ENCODE measurements at regions of chr5 and their contacts with region 1.

Region 1: GRCh38 chr5:142748568-142749249 is 21.5 kb upstream of the ARHGAP26 start:
- DNase-seq: peak; percentile 37
- CTCF ChIP-seq: peak; percentile 55

Region 2: DNA sequence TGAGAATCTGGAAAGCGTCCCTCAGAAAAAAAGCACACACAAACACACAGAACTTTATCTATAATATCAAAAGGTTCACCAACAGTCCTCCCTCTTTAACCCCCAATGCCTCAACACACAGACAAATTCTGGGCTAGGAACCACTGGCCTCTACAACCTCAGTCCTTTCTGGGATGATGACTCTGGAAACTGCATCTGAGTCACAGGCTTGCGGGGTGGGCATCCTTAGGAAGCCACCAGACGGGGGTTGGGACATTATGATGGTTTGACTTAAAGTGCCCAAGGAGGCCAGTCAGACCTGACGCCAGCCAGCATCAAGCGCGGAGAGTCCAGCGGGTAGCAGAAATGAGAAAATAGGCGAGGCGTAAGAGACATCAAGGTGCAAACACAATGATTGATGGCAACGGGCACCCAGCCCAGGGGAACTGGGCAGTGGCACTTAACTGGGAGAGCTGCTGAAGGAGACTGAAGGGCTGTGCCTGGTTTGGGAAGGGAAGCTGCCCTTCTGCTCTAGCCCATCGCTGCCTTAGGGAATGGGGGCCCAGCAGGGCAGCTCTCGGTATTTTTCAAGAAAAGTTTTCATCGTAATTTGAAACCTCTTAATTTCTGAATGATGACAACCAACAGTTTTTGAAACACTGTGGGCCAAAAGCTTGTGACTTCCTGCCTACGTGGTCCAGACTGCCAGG is 444.6 kb before region 1 on chr5:
- CTCF ChIA-PET with region 1: no interaction called
- POLR2A ChIA-PET with region 1: no interaction called
- DNase-seq: no peak
- CTCF ChIP-seq: no peak

Region 3: GRCh38 chr5:142472300-142472951 is 276.3 kb before region 1 on chr5:
- CTCF ChIA-PET with region 1: no interaction called
- POLR2A ChIA-PET with region 1: no interaction called
- DNase-seq: no peak
- CTCF ChIP-seq: no peak

Region 4: DNA sequence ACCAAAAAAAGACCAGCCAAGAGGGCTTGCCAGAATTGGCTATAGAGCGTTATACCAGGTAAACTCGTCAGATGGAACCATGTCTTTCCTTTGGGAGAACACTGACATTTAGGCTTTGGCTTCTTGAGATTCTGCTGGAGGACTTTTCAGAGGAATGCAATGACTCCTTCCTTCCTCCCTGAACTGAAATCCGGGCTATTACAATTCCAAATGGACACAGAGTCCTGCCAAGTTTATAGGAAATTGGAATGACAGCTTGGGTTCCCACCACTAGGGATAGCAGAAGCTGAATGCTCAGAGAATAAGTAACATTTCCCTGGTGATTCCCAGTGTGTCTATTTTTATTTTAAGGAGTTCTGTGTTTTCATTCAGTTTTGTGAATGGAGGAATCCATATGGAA is 205.8 kb before region 1 on chr5:
- CTCF ChIA-PET with region 1: no interaction called
- POLR2A ChIA-PET with region 1: no interaction called
- DNase-seq: no peak
- CTCF ChIP-seq: no peak

Region 5: DNA sequence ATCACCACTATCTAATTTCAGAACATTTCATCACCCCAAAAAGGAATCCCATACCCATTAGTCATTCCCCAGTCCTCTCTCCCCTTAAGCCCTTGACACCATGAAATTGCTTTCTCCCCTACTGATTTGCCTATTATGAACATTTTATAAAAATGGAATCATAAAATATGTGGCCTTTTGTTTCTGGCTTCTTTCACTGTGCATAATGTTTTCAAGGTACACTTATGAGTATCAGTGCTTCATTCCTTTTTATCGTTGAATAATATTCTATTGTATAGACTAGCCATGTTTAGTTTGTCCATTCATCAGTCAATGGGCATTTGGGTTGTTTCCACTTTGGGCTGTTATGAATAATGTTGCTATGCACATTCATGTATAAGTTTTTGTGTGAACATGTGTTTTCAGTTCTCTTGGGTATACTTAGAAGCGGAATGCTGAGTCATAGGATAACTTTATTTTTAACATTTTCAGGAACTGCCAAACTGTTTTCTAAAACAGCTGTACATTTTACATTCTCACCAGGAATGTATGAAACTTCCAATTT is 22.4 kb before region 1 on chr5:
- CTCF ChIA-PET with region 1: interaction called, 37 read pairs
- POLR2A ChIA-PET with region 1: no interaction called
- DNase-seq: no peak
- CTCF ChIP-seq: no peak

Region 6: DNA sequence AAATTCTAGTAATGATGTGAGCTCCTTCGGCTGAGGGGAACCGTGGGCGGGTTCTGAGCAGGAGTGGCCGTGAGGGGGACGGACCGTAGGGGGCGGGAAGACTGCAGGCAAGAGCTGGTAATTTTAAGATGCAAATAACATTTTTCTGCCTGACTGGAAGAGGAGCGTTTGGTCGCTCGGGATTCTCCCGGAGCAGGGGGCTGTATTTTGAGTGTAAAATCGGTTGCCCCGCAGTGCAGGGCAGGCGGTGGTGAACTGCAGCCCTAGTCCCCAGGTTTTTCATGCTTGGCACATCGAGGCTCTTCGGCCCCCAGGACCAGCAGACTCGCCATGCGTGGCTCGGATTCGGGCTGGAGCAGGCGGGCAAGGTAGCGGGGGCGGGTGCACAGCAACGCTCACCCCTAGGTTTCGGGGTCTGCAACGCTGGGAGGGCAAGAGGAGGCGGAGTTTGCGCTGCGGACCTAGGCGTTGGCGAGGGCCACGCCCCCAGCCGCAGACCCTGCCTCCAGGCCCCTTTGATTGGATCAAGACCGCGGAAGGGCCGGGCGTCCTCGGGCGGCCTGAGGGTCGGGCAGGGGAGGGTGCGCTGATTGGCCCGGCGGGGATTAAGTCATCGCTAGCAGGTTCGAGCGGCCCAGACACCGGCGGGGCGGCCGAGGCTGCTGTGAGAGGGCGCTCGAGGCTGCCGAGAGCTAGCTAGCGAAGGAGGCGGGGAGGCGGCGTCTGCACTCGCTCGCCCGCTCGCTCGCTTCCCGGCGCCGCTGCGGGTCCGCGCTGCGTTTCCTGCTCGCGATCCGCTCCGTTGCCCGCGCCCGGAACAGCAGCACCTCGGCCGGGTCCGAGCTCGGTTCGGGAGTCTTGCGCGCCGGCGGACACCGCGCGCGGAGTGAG is 21.3 kb after region 1 on chr5 and contains the start of gene ARHGAP26:
- CTCF ChIA-PET with region 1: interaction called, 30 read pairs
- POLR2A ChIA-PET with region 1: no interaction called
- DNase-seq: peak; percentile 96
- CTCF ChIP-seq: peak; percentile 19

Region 7: GRCh38 chr5:142864725-142865260 is 116.1 kb after region 1 on chr5:
- CTCF ChIA-PET with region 1: interaction called, 50 read pairs
- POLR2A ChIA-PET with region 1: no interaction called
- DNase-seq: no peak
- CTCF ChIP-seq: no peak

Region 8: DNA sequence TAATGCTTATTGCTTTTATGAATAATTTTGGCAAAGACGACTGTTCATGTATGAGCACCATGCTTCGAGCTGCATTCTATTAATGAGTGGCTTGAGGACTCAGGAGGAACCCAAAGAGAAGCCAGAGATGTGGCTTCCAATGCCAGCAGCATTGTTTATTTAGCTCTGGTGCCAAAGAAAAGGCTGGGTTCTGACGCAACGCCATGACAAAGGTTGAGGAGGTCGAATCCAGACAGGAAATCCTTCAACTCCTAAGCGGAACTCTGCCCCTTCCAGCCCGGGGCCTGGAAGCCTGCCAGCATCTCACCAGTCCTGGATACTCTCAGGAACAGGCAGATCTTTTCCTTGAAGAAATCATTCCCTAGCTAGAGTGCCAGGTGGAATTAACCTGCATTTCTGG is 125.8 kb after region 1 on chr5:
- CTCF ChIA-PET with region 1: interaction called, 80 read pairs
- POLR2A ChIA-PET with region 1: no interaction called
- DNase-seq: no peak
- CTCF ChIP-seq: no peak

Region 9: DNA sequence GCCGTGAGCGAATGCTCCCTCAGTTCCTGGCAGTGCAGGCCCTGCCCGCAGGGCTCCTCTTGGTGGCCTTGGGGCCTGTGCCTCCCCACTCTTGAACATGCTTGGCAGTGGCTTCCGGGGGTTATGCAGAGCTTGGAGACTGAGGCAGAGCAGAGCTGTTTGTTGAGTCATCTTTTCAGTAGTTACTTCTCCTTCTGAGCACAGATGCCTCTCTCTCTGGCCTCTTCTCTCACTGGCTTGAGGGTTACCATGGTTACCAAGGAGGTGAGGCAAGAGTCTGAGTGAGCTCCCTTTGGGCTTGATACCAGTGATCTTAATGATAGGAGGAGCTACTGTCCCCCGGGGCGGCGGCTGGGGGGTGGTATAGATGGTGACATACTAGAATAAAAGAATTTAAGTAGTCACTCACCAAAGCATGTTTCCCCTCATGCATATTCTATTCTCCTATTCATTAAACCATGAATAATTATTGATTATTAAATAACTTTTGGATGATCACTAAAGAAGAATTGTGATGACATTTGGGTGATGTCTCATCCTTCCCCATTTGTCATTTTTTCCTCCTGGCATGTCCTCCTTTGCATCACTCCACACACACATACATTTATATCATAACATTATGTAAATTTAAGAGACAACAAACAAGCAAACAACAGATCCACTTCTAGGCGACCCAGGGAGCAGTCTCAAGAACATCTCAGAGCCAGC is 132.5 kb after region 1 on chr5:
- CTCF ChIA-PET with region 1: interaction called, 80 read pairs
- POLR2A ChIA-PET with region 1: no interaction called
- DNase-seq: peak; percentile 40
- CTCF ChIP-seq: no peak

Region 10: GRCh38 chr5:142888469-142889085 is 139.9 kb after region 1 on chr5:
- CTCF ChIA-PET with region 1: interaction called, 35 read pairs
- POLR2A ChIA-PET with region 1: no interaction called
- DNase-seq: peak; percentile 44
- CTCF ChIP-seq: peak; percentile 63

Region 11: DNA sequence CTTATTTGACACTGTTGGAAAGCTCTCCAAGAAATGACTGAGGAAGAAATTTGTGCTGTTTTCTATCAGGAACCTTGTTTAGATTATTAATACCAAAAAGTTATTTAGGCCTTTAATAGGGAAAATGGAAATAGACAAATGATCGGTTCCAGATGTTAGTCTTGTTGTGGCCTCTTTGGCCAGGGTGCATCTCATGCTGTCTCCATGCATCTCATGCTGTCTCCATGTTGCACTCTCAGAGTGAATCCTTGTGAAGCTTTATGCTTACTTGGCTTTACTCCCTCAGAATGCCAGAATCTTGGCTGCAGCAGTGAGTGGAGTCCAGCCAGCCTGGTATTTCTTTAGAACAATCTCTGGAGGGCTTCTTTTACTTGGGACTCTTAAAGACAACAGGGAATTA is 206.9 kb after region 1 on chr5:
- CTCF ChIA-PET with region 1: no interaction called
- POLR2A ChIA-PET with region 1: no interaction called
- DNase-seq: no peak
- CTCF ChIP-seq: no peak